ENCODE measurements at regions of chr15 and their contacts with region 1.

Region 1: GRCh38 chr15:40108855-40109735 is at the start of gene BMF:
- DNase-seq: peak; percentile 89 to 97
- H3K4me3 ChIP-seq: peak within 1 kb of the TSS; percentile 66
- H3K27ac ChIP-seq: no peak within 1 kb of the TSS; the same call in 1 of the 2 replicates
- H3K4me1 ChIP-seq: peaks cover 41% of the 10 kb centered on the region
- H3K27me3 ChIP-seq: no peaks in the 10 kb centered on the region
- CTCF ChIP-seq: peak; percentile 58; the same call in 1 of the 2 replicates
- total RNA-seq, gene BMF: 8.2 and 11.0 TPM in 2 replicates

Region 2: DNA sequence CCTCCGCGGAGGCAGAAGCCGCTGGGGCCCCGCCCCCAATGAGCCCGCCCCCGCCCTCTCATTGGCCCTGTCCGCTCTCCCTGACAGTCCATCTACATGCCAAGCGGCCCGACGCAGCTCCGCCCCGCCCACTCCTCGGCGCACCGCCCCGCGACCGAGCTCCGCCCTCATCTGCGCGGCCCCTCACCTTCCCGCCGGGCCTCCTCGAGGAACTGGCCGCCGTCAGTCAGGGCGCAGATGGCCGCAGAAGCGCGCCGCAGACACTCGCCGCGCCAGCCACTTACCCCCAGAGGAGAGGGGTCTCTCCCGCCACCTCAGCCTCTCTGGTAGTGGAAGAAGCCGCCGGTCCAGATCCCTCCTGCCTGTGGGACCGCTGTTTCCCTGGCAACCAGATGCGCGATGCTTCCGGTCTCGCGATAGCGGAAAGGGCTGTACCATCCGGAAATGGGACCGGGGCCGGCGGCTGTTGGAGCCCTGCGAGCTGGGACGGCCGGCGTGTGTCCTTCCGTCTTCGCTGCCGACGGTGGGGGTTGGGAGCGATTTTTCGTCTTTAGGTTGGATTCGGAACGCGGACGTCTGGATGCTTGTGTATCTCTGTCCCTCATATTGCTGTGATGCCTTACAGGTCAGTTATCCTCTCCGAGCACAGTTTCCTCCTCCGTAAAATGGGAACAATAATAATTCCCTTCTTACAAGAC is 326.5 kb before region 1 on chr15 and contains the start of gene FSIP1:
- CTCF ChIA-PET with region 1: no interaction called
- POLR2A ChIA-PET with region 1: no interaction called
- intact Hi-C with region 1: loop called (anchors 5 kb)
- DNase-seq: peak; percentile 84 to 97
- H3K4me3 ChIP-seq: peak within 1 kb of the TSS; percentile 98
- H3K27ac ChIP-seq: peak within 1 kb of the TSS; percentile 31; the same call in 1 of the 2 replicates
- H3K4me1 ChIP-seq: peaks cover 9% of the 10 kb centered on the region
- H3K27me3 ChIP-seq: no peaks in the 10 kb centered on the region
- CTCF ChIP-seq: no peak
- total RNA-seq, gene FSIP1: 0.63 and 1.2 TPM in 2 replicates

Region 3: GRCh38 chr15:39976291-39977274 is 132.5 kb before region 1 on chr15:
- CTCF ChIA-PET with region 1: no interaction called
- POLR2A ChIA-PET with region 1: no interaction called
- intact Hi-C with region 1: no loop called
- DNase-seq: no peak
- H3K4me3 ChIP-seq: no peak overlapping the region
- H3K27ac ChIP-seq: no peak overlapping the region
- H3K4me1 ChIP-seq: no peaks in the 10 kb centered on the region
- H3K27me3 ChIP-seq: no peaks in the 10 kb centered on the region
- CTCF ChIP-seq: no peak

Region 4: GRCh38 chr15:40054605-40055545 is 54.2 kb before region 1 on chr15:
- CTCF ChIA-PET with region 1: interaction called, 12 read pairs
- POLR2A ChIA-PET with region 1: interaction called, 3 read pairs
- intact Hi-C with region 1: no loop called
- DNase-seq: peak; percentile 94 to 96
- H3K4me3 ChIP-seq: no peak overlapping the region
- H3K27ac ChIP-seq: peak overlapping the region; percentile 85
- H3K4me1 ChIP-seq: peaks cover 76% of the 10 kb centered on the region
- H3K27me3 ChIP-seq: no peaks in the 10 kb centered on the region
- CTCF ChIP-seq: no peak

Region 5: GRCh38 chr15:40160689-40161688 is 51.9 kb after region 1 on chr15 and contains the start of gene BUB1B:
- CTCF ChIA-PET with region 1: interaction called, 3 read pairs
- POLR2A ChIA-PET with region 1: interaction called, 3 read pairs
- intact Hi-C with region 1: loop called (anchors 1 kb)
- DNase-seq: peak; percentile 91 to 92
- H3K4me3 ChIP-seq: peak within 1 kb of the TSS; percentile 67
- H3K27ac ChIP-seq: no peak within 1 kb of the TSS
- H3K4me1 ChIP-seq: peaks cover 29% of the 10 kb centered on the region
- H3K27me3 ChIP-seq: no peaks in the 10 kb centered on the region
- CTCF ChIP-seq: no peak
- total RNA-seq, gene BUB1B: 74.3 and 75.3 TPM in 2 replicates

Region 6: GRCh38 chr15:40323239-40323952 is 214.3 kb after region 1 on chr15 and contains the start of gene INAFM2:
- CTCF ChIA-PET with region 1: interaction called, 10 read pairs
- POLR2A ChIA-PET with region 1: no interaction called
- intact Hi-C with region 1: no loop called
- DNase-seq: peak; percentile 59 to 81
- H3K4me3 ChIP-seq: peak within 1 kb of the TSS; percentile 59
- H3K27ac ChIP-seq: no peak within 1 kb of the TSS
- H3K4me1 ChIP-seq: peaks cover 10% of the 10 kb centered on the region; the same call in 1 of the 2 replicates
- H3K27me3 ChIP-seq: no peaks in the 10 kb centered on the region
- CTCF ChIP-seq: peak; percentile 50
- total RNA-seq, gene INAFM2: 2.4 and 3.1 TPM in 2 replicates